CD4-positive, alpha-beta T cell (primary cell): ENCODE measurements at regions of chr6 and their contacts with region 1.

Region 1: DNA sequence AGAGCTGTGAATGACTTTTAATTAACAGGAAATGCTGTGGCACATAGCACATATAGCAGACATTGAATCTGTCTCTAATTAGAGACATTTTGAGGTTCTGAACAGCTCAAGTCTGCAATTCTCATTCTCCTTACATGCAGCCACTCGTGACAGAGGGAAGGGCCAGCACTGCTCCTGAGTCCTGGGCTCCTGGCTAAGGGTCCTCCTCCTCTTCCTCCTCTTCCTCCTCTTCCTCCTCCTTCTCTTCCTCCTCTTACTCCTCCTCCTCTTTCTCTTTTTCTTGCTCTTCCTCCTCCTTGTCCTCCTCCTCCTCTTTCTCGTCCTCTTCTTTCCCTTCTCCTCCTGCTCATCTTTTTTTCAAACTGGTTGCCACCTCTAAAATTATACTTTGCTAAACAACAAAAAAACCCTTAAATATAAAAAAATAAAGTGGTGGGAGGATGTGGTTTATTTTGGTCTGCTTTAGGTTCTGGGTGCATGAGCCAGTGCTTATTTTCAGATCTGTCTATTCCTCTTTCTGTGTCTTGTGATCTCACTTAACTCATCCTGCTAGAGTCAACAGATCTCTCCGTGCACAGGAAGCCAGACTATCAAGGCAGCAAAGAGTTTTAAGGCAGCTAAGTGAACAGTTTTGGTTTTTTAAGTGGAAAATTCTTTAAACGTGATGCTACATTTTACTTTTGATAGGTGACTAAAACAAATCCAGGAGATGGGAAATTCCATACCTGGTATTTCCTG is 159.3 kb downstream of the CD83 start:
- DNase-seq: peak in 9 of 14 experiments; percentile 27 to 85 (median 51)
- ATAC-seq: peak; percentile 98
- H3K4me3 ChIP-seq: peak overlapping the region; percentile 15
- H3K4me3 Mint-ChIP-seq: peak overlapping the region; percentile 68
- H3K27ac ChIP-seq: peak overlapping the region; percentile 52 to 63
- H3K27ac Mint-ChIP-seq: peak overlapping the region; percentile 85
- H3K4me1 ChIP-seq: peaks cover 38% of the 10 kb centered on the region
- H3K4me1 Mint-ChIP-seq: peaks cover 70% of the 10 kb centered on the region
- H3K27me3 ChIP-seq: no peaks in the 10 kb centered on the region
- H3K27me3 Mint-ChIP-seq: no peaks in the 10 kb centered on the region
- CTCF ChIP-seq: no peak

Region 2: GRCh38 chr6:14228571-14228970 is 48.3 kb before region 1 on chr6:
- CTCF ChIA-PET with region 1: no interaction called
- POLR2A ChIA-PET with region 1: no interaction called
- intact Hi-C with region 1: loop called in 1 of 2 experiments (anchors 5 kb)
- DNase-seq: peak in 7 of 14 experiments; percentile 13 to 58 (median 34)
- ATAC-seq: peak; percentile 83
- H3K4me3 ChIP-seq: no peak overlapping the region
- H3K4me3 Mint-ChIP-seq: no peak overlapping the region
- H3K27ac ChIP-seq: no peak overlapping the region
- H3K27ac Mint-ChIP-seq: peak overlapping the region; percentile 61
- H3K4me1 ChIP-seq: peaks cover 3% of the 10 kb centered on the region
- H3K4me1 Mint-ChIP-seq: peaks cover 51% of the 10 kb centered on the region
- H3K27me3 ChIP-seq: no peaks in the 10 kb centered on the region
- H3K27me3 Mint-ChIP-seq: no peaks in the 10 kb centered on the region
- CTCF ChIP-seq: no peak

Region 3: GRCh38 chr6:14316635-14317386 is 40.0 kb after region 1 on chr6:
- CTCF ChIA-PET with region 1: no interaction called
- POLR2A ChIA-PET with region 1: no interaction called
- intact Hi-C with region 1: no loop called
- DNase-seq: peak in 4 of 14 experiments; percentile 3 to 33 (median 28)
- ATAC-seq: no peak
- H3K4me3 ChIP-seq: no peak overlapping the region
- H3K4me3 Mint-ChIP-seq: no peak overlapping the region
- H3K27ac ChIP-seq: no peak overlapping the region
- H3K27ac Mint-ChIP-seq: no peak overlapping the region
- H3K4me1 ChIP-seq: peaks cover 7% of the 10 kb centered on the region
- H3K4me1 Mint-ChIP-seq: peaks cover 13% of the 10 kb centered on the region
- H3K27me3 ChIP-seq: no peaks in the 10 kb centered on the region
- H3K27me3 Mint-ChIP-seq: no peaks in the 10 kb centered on the region
- CTCF ChIP-seq: peak; percentile 20

Region 4: GRCh38 chr6:14638906-14639761 is 362.3 kb after region 1 on chr6:
- CTCF ChIA-PET with region 1: no interaction called
- POLR2A ChIA-PET with region 1: interaction called, 3 read pairs
- intact Hi-C with region 1: loop called in 1 of 2 experiments (anchors 10 kb)
- DNase-seq: peak in 1 of 14 experiments; percentile 38
- ATAC-seq: no peak
- H3K4me3 ChIP-seq: no peak overlapping the region
- H3K4me3 Mint-ChIP-seq: no peak overlapping the region
- H3K27ac ChIP-seq: no peak overlapping the region
- H3K27ac Mint-ChIP-seq: no peak overlapping the region
- H3K4me1 ChIP-seq: peaks cover 40% of the 10 kb centered on the region
- H3K4me1 Mint-ChIP-seq: peaks cover 65% of the 10 kb centered on the region
- H3K27me3 ChIP-seq: no peaks in the 10 kb centered on the region
- H3K27me3 Mint-ChIP-seq: no peaks in the 10 kb centered on the region
- CTCF ChIP-seq: no peak

Region 5: GRCh38 chr6:14665827-14666724 is 389.2 kb after region 1 on chr6:
- CTCF ChIA-PET with region 1: no interaction called
- POLR2A ChIA-PET with region 1: no interaction called
- intact Hi-C with region 1: loop called in 1 of 2 experiments (anchors 2 kb)
- DNase-seq: peak in 3 of 14 experiments; percentile 25 to 81 (median 70)
- ATAC-seq: no peak
- H3K4me3 ChIP-seq: no peak overlapping the region
- H3K4me3 Mint-ChIP-seq: no peak overlapping the region
- H3K27ac ChIP-seq: no peak overlapping the region
- H3K27ac Mint-ChIP-seq: peak overlapping the region; percentile 3
- H3K4me1 ChIP-seq: peaks cover 33% of the 10 kb centered on the region
- H3K4me1 Mint-ChIP-seq: peaks cover 27% of the 10 kb centered on the region
- H3K27me3 ChIP-seq: no peaks in the 10 kb centered on the region
- H3K27me3 Mint-ChIP-seq: no peaks in the 10 kb centered on the region
- CTCF ChIP-seq: no peak